PC-3 (cell line): ENCODE measurements at regions of chr14 and their contacts with region 1.

Region 1: GRCh38 chr14:29242755-29243754 is 476.5 kb downstream of the FOXG1 start:
- DNase-seq: peak; percentile 23
- ATAC-seq: no peak
- H3K4me3 ChIP-seq: no peak overlapping the region
- H3K27ac ChIP-seq: no peak overlapping the region
- H3K4me1 ChIP-seq: peaks cover 30% of the 10 kb centered on the region
- H3K27me3 ChIP-seq: no peaks in the 10 kb centered on the region
- CTCF ChIP-seq: no peak

Region 2: DNA sequence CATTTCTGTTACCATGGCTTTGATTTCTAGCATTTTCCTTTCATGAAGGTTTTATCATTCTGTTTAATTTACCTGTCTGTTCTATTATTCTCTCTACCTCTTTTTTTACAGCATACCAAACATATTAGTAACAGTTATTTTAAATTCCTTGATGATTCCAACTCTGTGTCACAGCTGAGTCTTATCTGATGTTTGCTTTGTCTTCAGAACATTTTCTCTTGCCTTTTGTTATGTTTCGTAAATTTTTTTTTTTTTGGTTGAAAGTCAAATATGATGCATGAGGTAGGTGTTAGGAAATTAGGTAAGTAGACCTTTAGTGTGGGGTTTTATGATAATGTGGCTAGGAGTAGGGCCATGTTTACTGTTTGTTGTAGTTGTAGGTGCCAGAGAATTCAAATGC is 19.9 kb after region 1 on chr14:
- CTCF ChIA-PET with region 1: no interaction called
- POLR2A ChIA-PET with region 1: no interaction called
- intact Hi-C with region 1: loop called (anchors 1 kb)
- DNase-seq: peak; percentile 77
- ATAC-seq: peak; percentile 92
- H3K4me3 ChIP-seq: no peak overlapping the region
- H3K27ac ChIP-seq: peak overlapping the region; percentile 22; the same call in 1 of the 2 replicates
- H3K4me1 ChIP-seq: peaks cover 15% of the 10 kb centered on the region
- H3K27me3 ChIP-seq: no peaks in the 10 kb centered on the region
- CTCF ChIP-seq: no peak

Region 3: DNA sequence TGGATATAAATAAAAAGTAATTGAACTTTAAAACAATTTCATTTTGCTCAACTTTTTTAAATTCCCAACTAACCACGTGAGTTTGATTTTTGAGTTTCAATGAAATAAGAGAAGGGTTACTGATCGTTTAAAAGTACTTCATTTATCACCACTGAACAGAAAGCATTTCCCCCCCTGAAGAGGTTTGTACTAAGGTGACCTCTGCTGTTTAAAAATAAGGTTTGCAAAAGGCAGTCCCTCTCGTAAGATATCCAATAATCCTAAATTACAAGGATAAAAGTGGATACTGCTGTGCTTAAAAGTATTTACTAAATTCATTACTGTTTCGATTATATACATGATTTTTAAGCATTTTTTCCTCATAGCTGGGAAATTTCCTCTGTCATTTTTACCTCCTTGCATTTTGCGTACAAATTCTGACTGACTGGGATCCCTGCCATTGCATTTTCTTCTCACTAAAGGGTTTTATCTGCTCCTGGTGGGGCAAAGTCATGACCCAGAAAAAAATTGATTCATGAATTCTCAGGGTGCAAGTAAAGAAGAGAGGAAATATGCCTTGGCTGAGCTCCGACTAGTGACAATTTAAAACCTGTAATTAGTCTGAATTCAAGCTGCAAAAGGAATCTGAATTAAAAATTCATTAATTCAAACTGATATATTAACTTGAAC is 220.8 kb after region 1 on chr14:
- CTCF ChIA-PET with region 1: no interaction called
- POLR2A ChIA-PET with region 1: no interaction called
- intact Hi-C with region 1: loop called (anchors 5 kb)
- DNase-seq: peak; percentile 29
- ATAC-seq: peak; percentile 64
- H3K4me3 ChIP-seq: no peak overlapping the region
- H3K27ac ChIP-seq: no peak overlapping the region
- H3K4me1 ChIP-seq: peaks cover 1% of the 10 kb centered on the region
- H3K27me3 ChIP-seq: peaks cover 30% of the 10 kb centered on the region; the same call in 1 of the 2 replicates
- CTCF ChIP-seq: peak; percentile 52